Spleen (tissue), 13 donors: ENCODE measurements at regions of chr22 and their contacts with region 1.

Region 1: GRCh38 chr22:38859581-38860282 is 12.3 kb downstream of the CBX6 start:
- DNase-seq: no peak
- H3K4me3 ChIP-seq: no peak overlapping the region
- H3K27ac ChIP-seq: no peak overlapping the region
- H3K4me1 ChIP-seq: peaks cover 6 to 38% (median 27%) of the 10 kb centered on the region in 6 donors
- H3K27me3 ChIP-seq: no peaks in the 10 kb centered on the region
- CTCF ChIP-seq: no peak
- POLR2A ChIP-seq: no peak

Region 2: GRCh38 chr22:38751422-38752346 is 108.0 kb before region 1 on chr22:
- intact Hi-C with region 1: no loop called
- DNase-seq: peak; percentile 95
- H3K4me3 ChIP-seq: peak overlapping the region in 7 of 8 donors; percentile 20 to 97 (median 28)
- H3K27ac ChIP-seq: peak overlapping the region; percentile 80 to 100 (median 97)
- H3K4me1 ChIP-seq: peaks cover 37 to 85% (median 60%) of the 10 kb centered on the region in 6 donors
- H3K27me3 ChIP-seq: no peaks in the 10 kb centered on the region
- CTCF ChIP-seq: peak in 1 of 11 experiments; percentile 16
- POLR2A ChIP-seq: no peak

Region 3: GRCh38 chr22:38782402-38783094 is 77.2 kb before region 1 on chr22:
- intact Hi-C with region 1: loop called (anchors 5 kb)
- DNase-seq: no peak
- H3K4me3 ChIP-seq: no peak overlapping the region
- H3K27ac ChIP-seq: peak overlapping the region in 2 of 8 donors; percentile 31 to 50
- H3K4me1 ChIP-seq: peaks cover 6 to 27% (median 17%) of the 10 kb centered on the region in 6 donors
- H3K27me3 ChIP-seq: no peaks in the 10 kb centered on the region
- CTCF ChIP-seq: no peak
- POLR2A ChIP-seq: no peak